ENCODE measurements at regions of chr22 and their contacts with region 1.

Region 1: GRCh38 chr22:22681221-22681739 is 36.9 kb downstream of the GGTLC2 start:
- DNase-seq: no peak
- H3K4me3 ChIP-seq: no peak overlapping the region
- H3K27me3 ChIP-seq: no peaks in the 10 kb centered on the region
- CTCF ChIP-seq: no peak

Region 2: GRCh38 chr22:22605074-22605404 is 76.2 kb before region 1 on chr22:
- CTCF ChIA-PET with region 1: no interaction called
- POLR2A ChIA-PET with region 1: no interaction called
- DNase-seq: no peak
- H3K4me3 ChIP-seq: no peak overlapping the region
- H3K27me3 ChIP-seq: no peaks in the 10 kb centered on the region; the same call in 1 of the 2 replicates
- CTCF ChIP-seq: no peak

Region 3: GRCh38 chr22:22666307-22667091 is 14.8 kb before region 1 on chr22:
- CTCF ChIA-PET with region 1: interaction called, 39 read pairs
- POLR2A ChIA-PET with region 1: no interaction called
- DNase-seq: no peak
- H3K4me3 ChIP-seq: no peak overlapping the region
- H3K27me3 ChIP-seq: no peaks in the 10 kb centered on the region; the same call in 1 of the 2 replicates
- CTCF ChIP-seq: peak; percentile 72